Naive thymus-derived CD4-positive, alpha-beta T cell (primary cell): ENCODE measurements at regions of chrX and their contacts with region 1.

Region 1: GRCh38 chrX:129957241-129958082 is 25.0 kb upstream of the BCORL1 start:
- DNase-seq: peak in 2 of 9 donors; percentile 8 to 66
- ATAC-seq: peak; percentile 74
- H3K4me3 ChIP-seq: peak overlapping the region; percentile 47
- H3K4me3 Mint-ChIP-seq: peak overlapping the region; percentile 60 to 80 (median 68)
- H3K27ac ChIP-seq: peak overlapping the region; percentile 45
- H3K27ac Mint-ChIP-seq: peak overlapping the region in 7 of 9 donors; percentile 6 to 58 (median 32)
- H3K4me1 ChIP-seq: peaks cover 5 to 12% of the 10 kb centered on the region in 2 donors
- H3K4me1 Mint-ChIP-seq: peaks cover 11 to 31% (median 28%) of the 10 kb centered on the region in 7 donors
- H3K27me3 ChIP-seq: no peaks in the 10 kb centered on the region
- H3K27me3 Mint-ChIP-seq: peaks cover 0 to 8% (median 0%) of the 10 kb centered on the region in 5 donors

Region 2: GRCh38 chrX:129931411-129932015 is 25.9 kb before region 1 on chrX:
- CTCF ChIA-PET with region 1: no interaction called
- POLR2A ChIA-PET with region 1: interaction called, 3 read pairs
- intact Hi-C with region 1: loop called (anchors 1 to 2 kb)
- DNase-seq: peak; percentile 18 to 58 (median 33)
- ATAC-seq: peak; percentile 75
- H3K4me3 ChIP-seq: peak overlapping the region; percentile 61
- H3K4me3 Mint-ChIP-seq: peak overlapping the region; percentile 66 to 89 (median 80)
- H3K27ac ChIP-seq: peak overlapping the region; percentile 59
- H3K27ac Mint-ChIP-seq: peak overlapping the region; percentile 70 to 92 (median 85)
- H3K4me1 ChIP-seq: no peaks in the 10 kb centered on the region
- H3K4me1 Mint-ChIP-seq: peaks cover 0 to 6% (median 5%) of the 10 kb centered on the region in 7 donors
- H3K27me3 ChIP-seq: no peaks in the 10 kb centered on the region
- H3K27me3 Mint-ChIP-seq: peaks cover 0 to 20% (median 0%) of the 10 kb centered on the region in 5 donors